Naive thymus-derived CD8-positive, alpha-beta T cell (primary cell): ENCODE measurements at regions of chr10 and their contacts with region 1.

Region 1: GRCh38 chr10:73096449-73097304 is at the start of gene P4HA1:
- DNase-seq: peak; percentile 91 to 99 (median 96)
- ATAC-seq: peak; percentile 81 to 85
- H3K4me3 Mint-ChIP-seq: peak within 1 kb of the TSS; percentile 87 to 97 (median 92)
- H3K27ac Mint-ChIP-seq: peak within 1 kb of the TSS; percentile 78 to 97 (median 96)
- H3K4me1 Mint-ChIP-seq: peaks cover 15 to 34% (median 30%) of the 10 kb centered on the region in 4 donors
- H3K27me3 Mint-ChIP-seq: no peaks in the 10 kb centered on the region
- polyA plus RNA-seq, gene P4HA1: 14.2 to 17.6 (median 14.4) TPM

Region 2: GRCh38 chr10:73079779-73080541 is 16.7 kb before region 1 on chr10:
- POLR2A ChIA-PET with region 1: no interaction called
- DNase-seq: no peak
- ATAC-seq: no peak
- H3K4me3 Mint-ChIP-seq: no peak overlapping the region
- H3K27ac Mint-ChIP-seq: no peak overlapping the region
- H3K4me1 Mint-ChIP-seq: peaks cover 6 to 20% (median 17%) of the 10 kb centered on the region in 4 donors
- H3K27me3 Mint-ChIP-seq: no peaks in the 10 kb centered on the region

Region 3: GRCh38 chr10:73110345-73110849 is 13.7 kb after region 1 on chr10 and contains the start of gene NUDT13:
- POLR2A ChIA-PET with region 1: interaction called, 25 read pairs
- DNase-seq: peak in 9 of 10 donors; percentile 26 to 65 (median 44)
- ATAC-seq: peak; percentile 92 to 95
- H3K4me3 Mint-ChIP-seq: peak within 1 kb of the TSS; percentile 82 to 96 (median 92)
- H3K27ac Mint-ChIP-seq: peak within 1 kb of the TSS; percentile 65 to 95 (median 90)
- H3K4me1 Mint-ChIP-seq: peaks cover 1 to 19% (median 12%) of the 10 kb centered on the region in 4 donors
- H3K27me3 Mint-ChIP-seq: no peaks in the 10 kb centered on the region
- polyA plus RNA-seq, gene NUDT13: 1.0 to 1.7 (median 1.3) TPM

Region 4: DNA sequence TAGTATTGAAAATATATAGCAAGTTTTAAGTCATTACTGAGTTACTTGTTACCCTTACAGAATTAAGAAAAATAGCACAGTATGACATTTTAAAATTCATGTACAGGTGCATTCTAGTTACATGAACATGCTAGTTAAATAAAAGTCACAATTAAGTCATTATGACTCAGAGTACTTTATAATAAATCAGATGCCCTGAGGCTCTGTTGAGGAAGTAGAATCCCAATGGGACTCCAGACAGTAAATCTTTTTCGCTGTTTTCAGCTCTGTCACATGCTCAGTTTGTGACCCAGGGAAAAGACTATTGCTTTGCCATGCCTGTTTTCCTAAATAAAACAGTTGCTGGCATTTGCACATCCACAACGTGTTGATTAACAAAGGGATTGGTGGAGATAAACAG is 34.6 kb after region 1 on chr10:
- POLR2A ChIA-PET with region 1: no interaction called
- DNase-seq: no peak
- ATAC-seq: no peak
- H3K4me3 Mint-ChIP-seq: no peak overlapping the region
- H3K27ac Mint-ChIP-seq: no peak overlapping the region
- H3K4me1 Mint-ChIP-seq: peaks cover 0 to 2% (median 0%) of the 10 kb centered on the region in 4 donors
- H3K27me3 Mint-ChIP-seq: no peaks in the 10 kb centered on the region